Head of caudate nucleus (tissue), 42 donors: ENCODE measurements at regions of chr1 and their contacts with region 1.

Region 1: GRCh38 chr1:154183045-154183915 is 8.6 kb downstream of the TPM3 start:
- DNase-seq: peak; percentile 93 to 98 (median 96)

Region 2: DNA sequence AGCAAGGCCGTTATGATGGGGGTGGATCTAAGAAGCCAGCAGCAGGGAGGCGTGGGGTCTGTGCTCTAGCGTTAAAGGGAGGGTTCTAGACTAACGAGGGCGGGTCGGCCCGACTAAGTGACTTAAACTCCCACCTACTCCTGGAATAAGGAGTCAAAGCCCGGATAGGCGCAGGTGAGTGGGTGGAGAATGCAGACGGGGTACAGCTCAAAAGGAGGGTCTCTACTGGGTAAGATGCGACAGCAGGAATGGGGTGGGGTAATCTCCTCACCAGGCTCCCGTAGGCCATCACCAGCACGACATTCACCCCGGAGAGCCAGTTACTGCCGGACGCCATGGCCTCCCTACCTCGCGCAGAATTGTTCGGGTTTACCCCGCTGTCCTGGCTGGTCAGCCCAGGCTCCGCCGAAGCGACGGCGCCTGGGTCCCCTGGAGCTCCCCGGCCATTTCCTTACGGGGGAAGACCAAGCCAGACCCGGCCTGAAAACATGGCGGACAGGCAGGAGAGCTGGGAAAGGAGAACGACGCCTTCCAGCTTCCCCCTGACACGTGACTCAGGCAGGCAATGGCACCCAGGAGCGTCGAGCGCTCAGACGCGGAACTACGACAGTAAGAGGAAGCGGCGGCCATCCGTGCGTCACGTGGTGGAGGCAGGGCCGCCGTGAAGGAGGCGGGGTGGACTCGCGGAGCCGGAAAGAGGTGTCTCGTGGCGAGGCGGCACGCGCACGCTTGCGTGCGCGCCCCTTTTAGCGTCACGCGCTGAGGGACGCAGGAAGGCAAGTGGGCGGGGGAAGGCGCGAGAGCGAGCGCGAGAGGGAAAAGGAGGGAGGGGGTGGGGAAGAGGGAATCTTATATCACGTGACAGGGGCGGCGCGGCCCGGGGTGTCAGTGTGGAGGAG is 37.0 kb after region 1 on chr1 and contains the start of gene UBAP2L:
- intact Hi-C with region 1: loop called (anchors 5 kb)
- DNase-seq: peak; percentile 96 to 99 (median 98)